ENCODE measurements at regions of chr10 and their contacts with region 1.

Region 1: GRCh38 chr10:101569838-101570766 is 18.0 kb downstream of the POLL start:
- DNase-seq: peak; percentile 98
- H3K4me3 ChIP-seq: peak overlapping the region; percentile 66 to 70
- H3K27ac ChIP-seq: peak overlapping the region in 1 of 2 experiments; percentile 56; a peak in 1 of 4 replicates
- H3K4me1 ChIP-seq: peaks cover 0 to 29% of the 10 kb centered on the region in 2 experiments; a peak in 1 of 4 replicates
- H3K27me3 ChIP-seq: no peaks in the 10 kb centered on the region; the same call in 1 of the 2 replicates
- CTCF ChIP-seq: peak; percentile 69
- EP300 ChIP-seq: no peak
- RAD21 ChIP-seq: peak; percentile 76

Region 2: DNA sequence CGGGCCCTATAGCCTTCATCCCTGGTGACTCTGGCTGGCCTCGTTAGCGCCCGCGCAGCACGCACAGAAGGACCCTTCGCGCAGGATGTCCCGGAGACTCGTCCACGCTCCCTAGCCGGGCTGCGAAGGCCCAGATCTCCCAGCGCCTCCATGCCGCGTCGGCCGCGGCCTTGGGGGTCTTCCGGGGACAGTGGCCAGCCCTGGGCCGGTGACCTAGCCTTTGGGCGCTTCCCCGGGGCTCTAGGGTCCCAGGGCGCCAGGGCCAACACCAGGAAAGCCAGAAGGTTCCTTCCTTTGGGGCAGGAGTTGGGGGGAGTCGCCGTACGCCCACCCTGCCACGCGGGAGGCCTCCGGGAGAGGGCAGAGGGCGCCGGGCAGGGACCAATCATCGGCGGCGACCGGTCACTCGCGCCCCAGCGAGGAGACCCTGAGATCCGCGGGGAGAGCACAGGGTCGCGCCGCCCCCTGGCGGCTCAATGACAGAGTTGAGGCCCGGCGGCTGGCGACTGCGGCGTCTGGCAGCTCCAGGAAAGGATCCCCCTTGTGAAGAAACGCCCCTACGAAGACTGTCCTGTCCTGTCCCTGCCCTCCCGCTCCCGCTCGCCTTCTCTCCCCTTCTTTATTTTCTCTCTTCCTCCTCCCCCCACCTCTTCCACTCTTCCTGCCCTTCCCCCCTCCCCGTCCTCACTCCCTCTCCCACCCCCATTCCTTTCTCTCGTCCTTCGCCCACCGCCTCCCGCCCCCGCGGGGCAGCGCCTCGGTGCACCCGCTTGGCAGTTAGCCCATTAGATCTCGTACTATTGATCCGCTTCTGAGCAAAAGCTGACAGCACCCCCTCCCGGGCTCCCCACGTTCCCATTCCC is 278.5 kb before region 1 on chr10:
- CTCF ChIA-PET with region 1: interaction called, 81 read pairs
- POLR2A ChIA-PET with region 1: interaction called, 5 read pairs
- DNase-seq: peak; percentile 94
- H3K4me3 ChIP-seq: peak overlapping the region; percentile 57 to 75
- H3K27ac ChIP-seq: peak overlapping the region in 1 of 2 experiments; percentile 92; a peak in 2 of 4 replicates
- H3K4me1 ChIP-seq: peaks cover 0 to 15% of the 10 kb centered on the region in 2 experiments; a peak in 1 of 4 replicates
- H3K27me3 ChIP-seq: peaks cover 16% of the 10 kb centered on the region; the same call in 1 of the 2 replicates
- CTCF ChIP-seq: peak; percentile 62
- EP300 ChIP-seq: no peak
- RAD21 ChIP-seq: peak; percentile 66

Region 3: DNA sequence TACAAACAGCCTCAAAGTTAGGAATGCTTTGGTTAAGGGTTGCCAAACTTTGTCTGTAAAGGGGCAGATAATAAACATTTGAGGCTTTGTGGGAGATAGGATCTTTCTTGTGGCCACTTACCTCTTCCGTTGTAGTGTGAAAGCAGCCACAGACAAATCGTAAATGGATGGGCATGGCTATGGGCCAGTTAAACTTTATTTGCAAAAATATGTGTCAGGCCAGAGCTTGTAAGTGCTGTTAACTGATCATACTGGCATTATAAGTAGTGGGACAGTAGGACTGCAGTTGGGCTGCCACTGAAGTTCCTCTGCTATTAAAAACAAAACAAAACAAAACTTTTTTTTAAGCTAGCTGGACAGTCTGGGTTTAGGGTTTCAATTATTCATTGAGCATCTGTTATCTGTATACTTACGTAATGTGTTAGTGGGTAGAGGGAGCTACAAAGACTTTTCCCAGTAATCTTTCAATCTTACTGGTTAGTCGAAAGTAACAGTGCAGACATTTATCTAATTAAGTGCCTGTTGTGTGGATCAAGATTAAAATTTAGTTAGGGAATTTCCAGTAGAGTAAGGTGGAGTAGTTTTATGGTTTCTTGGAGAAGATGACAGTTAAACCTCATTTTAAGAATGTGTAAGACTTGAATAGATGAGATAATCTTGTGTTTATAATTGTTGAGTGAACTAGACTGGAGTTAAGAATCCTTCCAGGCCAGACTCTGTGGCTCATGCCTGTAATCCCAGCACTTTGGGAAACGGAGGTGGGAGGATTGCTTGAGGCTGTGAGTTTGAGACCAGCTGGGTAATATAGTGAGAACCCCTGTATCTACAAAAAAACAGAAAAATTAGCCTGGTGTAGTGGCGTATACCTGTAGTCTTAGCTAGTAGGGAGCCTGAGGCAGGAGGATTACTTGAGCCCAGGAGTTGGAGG is 116.0 kb before region 1 on chr10:
- CTCF ChIA-PET with region 1: interaction called, 19 read pairs
- POLR2A ChIA-PET with region 1: no interaction called
- DNase-seq: no peak
- H3K4me3 ChIP-seq: no peak overlapping the region
- H3K27ac ChIP-seq: peak overlapping the region in 1 of 2 experiments; percentile 12; a peak in 1 of 4 replicates
- H3K4me1 ChIP-seq: peaks cover 0 to 34% of the 10 kb centered on the region in 2 experiments; a peak in 2 of 4 replicates
- H3K27me3 ChIP-seq: no peaks in the 10 kb centered on the region
- CTCF ChIP-seq: no peak
- EP300 ChIP-seq: no peak
- RAD21 ChIP-seq: no peak

Region 4: GRCh38 chr10:101495324-101495925 is 74.7 kb before region 1 on chr10:
- CTCF ChIA-PET with region 1: interaction called, 26 read pairs
- POLR2A ChIA-PET with region 1: no interaction called
- DNase-seq: peak; percentile 43
- H3K4me3 ChIP-seq: no peak overlapping the region
- H3K27ac ChIP-seq: no peak overlapping the region
- H3K4me1 ChIP-seq: peaks cover 0 to 9% of the 10 kb centered on the region in 2 experiments; a peak in 2 of 4 replicates
- H3K27me3 ChIP-seq: no peaks in the 10 kb centered on the region
- CTCF ChIP-seq: peak; percentile 41
- EP300 ChIP-seq: no peak
- RAD21 ChIP-seq: peak; percentile 78

Region 5: GRCh38 chr10:101558202-101558601 is 11.9 kb before region 1 on chr10:
- CTCF ChIA-PET with region 1: interaction called, 58 read pairs
- POLR2A ChIA-PET with region 1: no interaction called
- DNase-seq: no peak
- H3K4me3 ChIP-seq: no peak overlapping the region
- H3K27ac ChIP-seq: peak overlapping the region in 1 of 2 experiments; percentile 95; a peak in 1 of 4 replicates
- H3K4me1 ChIP-seq: peaks cover 0 to 50% of the 10 kb centered on the region in 2 experiments; a peak in 1 of 4 replicates
- H3K27me3 ChIP-seq: no peaks in the 10 kb centered on the region
- CTCF ChIP-seq: no peak
- EP300 ChIP-seq: no peak
- RAD21 ChIP-seq: no peak

Region 6: GRCh38 chr10:101782811-101783735 is 213.0 kb after region 1 on chr10 and contains the start of gene NPM3:
- CTCF ChIA-PET with region 1: interaction called, 25 read pairs
- POLR2A ChIA-PET with region 1: no interaction called
- DNase-seq: peak; percentile 94
- H3K4me3 ChIP-seq: peak within 1 kb of the TSS; percentile 77 to 96
- H3K27ac ChIP-seq: peak within 1 kb of the TSS; percentile 70 to 72
- H3K4me1 ChIP-seq: peaks cover 8 to 23% of the 10 kb centered on the region in 2 experiments; a peak in 3 of 4 replicates
- H3K27me3 ChIP-seq: no peaks in the 10 kb centered on the region
- CTCF ChIP-seq: no peak
- EP300 ChIP-seq: no peak
- RAD21 ChIP-seq: no peak
- polyA plus RNA-seq, gene NPM3: 89.3 and 105 TPM in 2 replicates

Measured in SK-N-SH (cell line).